IMR-90 (cell line): ENCODE measurements at regions of chr22 and their contacts with region 1.

Region 1: GRCh38 chr22:30386960-30387827 is at the start of gene RNF215:
- DNase-seq: peak; percentile 64
- ATAC-seq: peak; percentile 97
- H3K4me3 ChIP-seq: peak within 1 kb of the TSS; percentile 75
- H3K27ac ChIP-seq: peak within 1 kb of the TSS; percentile 85
- H3K4me1 ChIP-seq: peaks cover 12% of the 10 kb centered on the region
- H3K27me3 ChIP-seq: no peaks in the 10 kb centered on the region
- CTCF ChIP-seq: peak; percentile 88
- POLR2A ChIP-seq: peak; percentile 50; the same call in 1 of the 2 replicates
- RAD21 ChIP-seq: peak; percentile 80
- total RNA-seq, gene RNF215: 13.6 and 15.8 TPM in 2 replicates

Region 2: GRCh38 chr22:30104501-30105156 is 282.6 kb before region 1 on chr22:
- CTCF ChIA-PET with region 1: interaction called, 3 read pairs
- POLR2A ChIA-PET with region 1: no interaction called
- dilution Hi-C with region 1: no loop called
- in situ Hi-C with region 1: loop called (anchors 10 kb)
- intact Hi-C with region 1: loop called (anchors 2 kb)
- DNase-seq: peak; percentile 54
- ATAC-seq: no peak
- H3K4me3 ChIP-seq: no peak overlapping the region
- H3K27ac ChIP-seq: no peak overlapping the region; the same call in 1 of the 2 replicates
- H3K4me1 ChIP-seq: no peaks in the 10 kb centered on the region
- H3K27me3 ChIP-seq: no peaks in the 10 kb centered on the region
- CTCF ChIP-seq: no peak
- POLR2A ChIP-seq: no peak
- RAD21 ChIP-seq: no peak

Region 3: DNA sequence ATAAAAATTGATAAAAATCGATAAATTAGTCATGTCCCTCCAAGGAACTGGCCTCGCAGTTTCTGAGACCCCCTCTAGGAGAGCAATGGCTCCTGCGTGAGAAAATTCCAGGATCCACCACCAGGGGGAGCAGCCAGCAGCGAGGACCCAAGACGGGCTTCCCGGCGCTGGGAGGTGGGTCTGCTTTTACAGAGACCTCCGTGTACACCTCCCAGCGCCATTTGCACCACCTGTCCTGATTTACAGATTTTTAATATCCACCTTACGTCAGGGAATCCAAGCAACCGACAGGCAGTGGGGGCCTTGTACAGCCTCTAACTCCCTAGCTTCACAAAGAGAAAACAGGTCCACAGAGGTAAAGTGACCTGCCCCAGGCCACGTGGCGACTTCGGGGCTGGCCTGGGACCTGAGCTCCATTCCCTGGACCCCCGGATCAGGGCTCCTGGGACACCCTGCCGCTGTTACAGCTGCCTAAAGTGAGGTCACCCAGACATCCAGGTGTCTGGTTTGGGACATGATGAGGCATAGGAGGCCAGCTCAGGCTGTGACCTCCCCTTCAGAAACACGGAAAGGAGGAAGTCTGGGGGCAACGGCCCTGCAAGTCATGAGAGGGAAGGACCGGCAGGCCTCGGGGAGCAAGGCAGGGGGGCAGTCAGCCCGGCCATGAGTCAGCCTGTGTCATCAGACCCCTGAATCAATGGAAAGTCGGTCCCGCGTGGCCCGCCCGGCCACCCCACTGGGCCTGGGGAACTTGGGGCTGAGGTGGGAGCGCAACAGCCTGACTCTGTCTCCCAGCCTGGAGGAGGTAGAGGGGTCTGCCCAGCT is 124.1 kb before region 1 on chr22:
- CTCF ChIA-PET with region 1: interaction called, 7 read pairs
- POLR2A ChIA-PET with region 1: interaction called, 3 read pairs
- dilution Hi-C with region 1: no loop called
- in situ Hi-C with region 1: no loop called
- intact Hi-C with region 1: loop called (anchors 2 kb)
- DNase-seq: peak; percentile 61
- ATAC-seq: peak; percentile 87
- H3K4me3 ChIP-seq: peak overlapping the region; percentile 26; the same call in 1 of the 2 replicates
- H3K27ac ChIP-seq: no peak overlapping the region
- H3K4me1 ChIP-seq: peaks cover 6% of the 10 kb centered on the region; the same call in 1 of the 2 replicates
- H3K27me3 ChIP-seq: no peaks in the 10 kb centered on the region; the same call in 1 of the 2 replicates
- CTCF ChIP-seq: peak; percentile 91
- POLR2A ChIP-seq: no peak
- RAD21 ChIP-seq: peak; percentile 72

Region 4: DNA sequence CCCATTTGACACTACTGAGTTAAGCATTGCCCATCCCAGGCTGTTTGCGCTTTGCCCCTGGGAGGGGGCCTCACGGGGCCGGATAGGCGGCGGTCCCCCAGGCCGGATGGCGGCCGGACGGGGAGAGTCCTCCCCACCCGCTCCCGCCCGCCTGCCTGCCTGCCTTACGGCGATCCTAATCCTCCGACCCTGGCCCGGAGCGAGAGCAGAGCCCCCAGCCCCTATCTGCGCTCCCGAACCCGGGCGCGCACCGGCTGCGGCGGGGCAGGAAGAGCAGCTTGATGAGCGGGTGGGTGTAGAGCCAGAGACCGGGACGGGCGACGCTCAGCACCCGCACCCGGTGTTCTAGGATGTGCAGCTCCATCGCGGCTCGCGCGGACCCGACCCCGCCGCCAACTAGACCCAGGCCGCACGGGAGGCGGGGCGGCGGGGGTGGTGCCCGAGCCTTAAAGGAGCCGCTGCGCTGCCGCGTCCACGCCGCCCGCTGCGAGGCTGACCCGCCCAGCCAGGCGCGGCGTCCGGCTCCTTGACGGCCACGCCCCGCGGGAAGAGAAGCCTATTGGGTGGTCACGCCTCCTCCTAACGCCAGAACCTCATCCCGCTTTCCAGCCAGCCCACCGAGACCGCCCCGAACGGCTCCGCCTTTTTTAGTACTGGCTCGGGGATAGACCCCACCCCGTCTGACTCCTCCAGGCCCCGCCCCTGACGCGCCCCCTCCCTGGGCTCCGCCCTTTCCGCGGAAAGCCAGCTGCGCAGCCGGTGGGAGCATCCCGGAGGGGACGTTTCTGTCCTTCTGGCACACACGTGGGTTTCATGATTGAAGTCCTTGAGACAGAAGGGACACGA is 97.8 kb before region 1 on chr22 and contains the start of gene CASTOR1:
- CTCF ChIA-PET with region 1: interaction called, 7 read pairs
- POLR2A ChIA-PET with region 1: interaction called, 5 read pairs
- dilution Hi-C with region 1: no loop called
- in situ Hi-C with region 1: no loop called
- intact Hi-C with region 1: loop called (anchors 1 kb)
- DNase-seq: peak; percentile 97
- ATAC-seq: peak; percentile 91
- H3K4me3 ChIP-seq: peak within 1 kb of the TSS; percentile 90
- H3K27ac ChIP-seq: peak within 1 kb of the TSS; percentile 57
- H3K4me1 ChIP-seq: peaks cover 20% of the 10 kb centered on the region; the same call in 1 of the 2 replicates
- H3K27me3 ChIP-seq: no peaks in the 10 kb centered on the region
- CTCF ChIP-seq: no peak
- POLR2A ChIP-seq: no peak; the same call in 1 of the 2 replicates
- RAD21 ChIP-seq: no peak
- total RNA-seq, gene CASTOR1: 10.6 and 11.7 TPM in 2 replicates

Region 5: DNA sequence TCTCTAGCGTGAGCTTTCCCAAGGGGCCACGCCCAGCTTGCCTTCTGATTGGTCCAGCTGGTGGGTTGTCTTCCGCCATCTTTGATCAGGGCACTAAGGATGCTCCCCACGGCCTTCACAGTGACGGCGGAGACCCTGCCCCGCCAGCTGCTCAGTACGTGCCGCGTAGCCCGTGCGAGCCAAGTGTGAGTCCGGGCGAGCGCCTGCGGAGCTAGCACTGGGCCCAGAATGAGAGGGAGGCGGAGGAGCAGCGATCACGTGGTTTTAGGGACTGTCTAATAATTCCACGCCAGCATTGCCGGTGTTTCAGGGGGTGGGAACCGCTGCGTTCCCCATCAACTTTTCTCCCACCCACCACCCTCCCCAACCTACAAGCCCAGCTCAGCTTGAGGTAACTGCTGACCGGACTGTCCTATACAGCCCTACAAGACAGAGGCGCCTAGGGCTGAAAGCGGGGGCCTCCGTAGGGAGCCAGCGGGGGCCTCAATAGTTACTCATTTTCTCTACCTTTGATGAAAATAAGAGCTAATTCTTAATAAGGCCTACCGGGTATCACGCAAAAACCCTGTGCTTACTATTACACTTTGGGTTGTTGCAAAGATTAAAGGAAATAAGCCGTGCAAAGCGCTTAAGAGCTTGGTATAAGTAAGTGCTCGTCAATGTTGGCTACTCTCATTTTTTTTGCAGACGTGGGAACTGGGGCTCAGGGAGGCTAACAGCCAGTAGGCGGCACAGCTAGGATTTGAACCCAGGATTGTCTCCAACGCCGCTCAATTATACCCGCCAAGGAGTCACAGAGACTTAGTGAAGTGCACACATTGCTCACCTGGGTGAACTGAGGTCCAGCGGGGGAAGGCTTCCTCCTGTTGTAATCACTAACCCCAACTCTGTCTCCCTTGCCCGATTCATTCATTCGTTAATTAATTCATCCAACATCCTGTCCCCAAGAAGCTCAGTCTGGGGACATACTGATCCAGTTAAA is 37.1 kb after region 1 on chr22:
- CTCF ChIA-PET with region 1: interaction called, 3 read pairs
- POLR2A ChIA-PET with region 1: no interaction called
- dilution Hi-C with region 1: no loop called
- in situ Hi-C with region 1: no loop called
- intact Hi-C with region 1: loop called (anchors 2 kb)
- DNase-seq: peak; percentile 100
- ATAC-seq: peak; percentile 78
- H3K4me3 ChIP-seq: peak overlapping the region; percentile 19
- H3K27ac ChIP-seq: peak overlapping the region; percentile 56
- H3K4me1 ChIP-seq: peaks cover 24% of the 10 kb centered on the region
- H3K27me3 ChIP-seq: no peaks in the 10 kb centered on the region
- CTCF ChIP-seq: no peak
- POLR2A ChIP-seq: peak; percentile 57
- RAD21 ChIP-seq: no peak

Region 6: DNA sequence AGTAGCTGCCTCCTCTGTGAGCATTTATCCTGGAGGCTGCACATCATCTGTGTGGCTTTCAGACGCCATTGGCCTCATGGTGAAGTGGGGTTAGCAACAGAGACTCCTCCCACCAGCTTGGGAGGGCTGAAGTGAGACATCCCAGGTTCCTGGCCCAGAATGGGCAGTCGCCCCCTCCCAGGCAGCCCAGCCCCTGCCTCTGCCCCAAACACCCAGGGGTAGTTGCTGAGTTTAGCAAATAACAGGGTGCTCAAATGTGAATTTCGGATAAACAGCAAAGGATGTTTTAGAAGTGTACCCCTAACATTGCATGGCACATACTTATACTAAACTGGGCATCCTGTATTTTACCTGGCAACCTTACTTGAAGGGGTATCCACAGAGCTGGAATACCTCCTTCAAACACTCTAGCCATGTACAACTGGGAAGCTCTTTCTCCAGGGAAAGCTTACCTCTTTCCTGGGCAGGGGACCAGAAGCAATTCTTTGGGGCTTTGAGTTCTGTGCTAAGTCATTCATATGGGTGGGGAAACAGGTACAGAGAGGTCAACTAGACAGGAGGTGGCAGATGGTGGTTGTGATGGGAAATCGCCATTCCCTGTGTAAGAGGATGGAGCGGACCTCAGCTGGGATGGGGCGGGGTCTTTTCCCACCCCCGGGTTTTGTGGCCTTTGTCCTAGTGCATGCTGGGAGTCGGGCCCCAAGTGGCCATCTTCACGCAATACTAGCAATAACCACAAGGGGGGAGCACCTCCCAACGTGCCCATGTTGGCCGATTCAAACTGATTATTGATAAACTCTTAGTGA is 57.6 kb after region 1 on chr22:
- CTCF ChIA-PET with region 1: no interaction called
- POLR2A ChIA-PET with region 1: no interaction called
- dilution Hi-C with region 1: no loop called
- in situ Hi-C with region 1: no loop called
- intact Hi-C with region 1: no loop called
- DNase-seq: peak; percentile 52
- ATAC-seq: peak; percentile 94
- H3K4me3 ChIP-seq: no peak overlapping the region
- H3K27ac ChIP-seq: no peak overlapping the region
- H3K4me1 ChIP-seq: peaks cover 5% of the 10 kb centered on the region; the same call in 1 of the 2 replicates
- H3K27me3 ChIP-seq: peaks cover 8% of the 10 kb centered on the region
- CTCF ChIP-seq: peak; percentile 76
- POLR2A ChIP-seq: peak; percentile 48; the same call in 1 of the 2 replicates
- RAD21 ChIP-seq: peak; percentile 76

Region 7: GRCh38 chr22:30469165-30469564 is 82.0 kb after region 1 on chr22:
- CTCF ChIA-PET with region 1: no interaction called
- POLR2A ChIA-PET with region 1: no interaction called
- dilution Hi-C with region 1: no loop called
- in situ Hi-C with region 1: no loop called
- intact Hi-C with region 1: no loop called
- DNase-seq: no peak
- ATAC-seq: no peak
- H3K4me3 ChIP-seq: no peak overlapping the region
- H3K27ac ChIP-seq: no peak overlapping the region
- H3K4me1 ChIP-seq: no peaks in the 10 kb centered on the region
- H3K27me3 ChIP-seq: peaks cover 64% of the 10 kb centered on the region
- CTCF ChIP-seq: no peak
- POLR2A ChIP-seq: no peak
- RAD21 ChIP-seq: no peak

Region 8: DNA sequence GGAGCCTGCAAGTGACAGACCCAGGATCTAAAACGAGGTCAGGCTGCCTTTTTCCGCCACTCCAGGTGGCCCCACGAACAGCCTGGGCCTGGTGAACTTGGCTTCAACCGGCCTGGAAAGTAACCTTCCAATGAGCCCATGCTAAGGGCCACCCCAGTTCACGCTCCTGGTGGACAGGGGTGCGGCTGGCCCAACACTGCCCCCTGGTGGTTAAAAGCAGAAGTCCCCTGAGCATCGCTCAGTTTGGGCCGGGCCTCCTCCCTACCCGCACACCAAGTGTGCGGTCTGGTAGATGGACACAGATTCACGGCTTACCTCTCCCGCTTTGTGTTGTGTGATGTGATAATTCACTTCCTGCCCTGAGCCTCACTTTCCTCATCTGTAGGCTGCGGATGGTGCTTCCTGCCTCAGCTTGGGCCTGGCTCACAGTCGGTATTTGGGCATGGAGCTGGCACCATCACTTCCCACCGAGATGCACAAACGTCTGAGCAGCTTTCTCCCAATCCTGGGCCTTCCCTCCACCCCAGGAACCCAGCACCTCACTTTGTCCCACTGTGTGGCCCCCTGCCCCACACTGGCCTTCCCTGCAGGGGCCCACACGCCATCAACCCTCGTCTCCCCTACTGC is 98.3 kb after region 1 on chr22:
- CTCF ChIA-PET with region 1: interaction called, 3 read pairs
- POLR2A ChIA-PET with region 1: no interaction called
- dilution Hi-C with region 1: no loop called
- in situ Hi-C with region 1: loop called (anchors 10 kb)
- intact Hi-C with region 1: loop called (anchors 1 kb)
- DNase-seq: peak; percentile 33
- ATAC-seq: peak; percentile 100
- H3K4me3 ChIP-seq: no peak overlapping the region
- H3K27ac ChIP-seq: no peak overlapping the region
- H3K4me1 ChIP-seq: no peaks in the 10 kb centered on the region
- H3K27me3 ChIP-seq: peaks cover 26% of the 10 kb centered on the region
- CTCF ChIP-seq: peak; percentile 90
- POLR2A ChIP-seq: no peak
- RAD21 ChIP-seq: peak; percentile 89